Activated CD4-positive, alpha-beta T cell treated with anti-CD3 and anti-CD28 coated beads, Interleukin-2, amount 10 ng/mL, durations not matched to agents 24 days and 14 days (primary cell): ENCODE measurements at regions of chr12 and their contacts with region 1.

Region 1: DNA sequence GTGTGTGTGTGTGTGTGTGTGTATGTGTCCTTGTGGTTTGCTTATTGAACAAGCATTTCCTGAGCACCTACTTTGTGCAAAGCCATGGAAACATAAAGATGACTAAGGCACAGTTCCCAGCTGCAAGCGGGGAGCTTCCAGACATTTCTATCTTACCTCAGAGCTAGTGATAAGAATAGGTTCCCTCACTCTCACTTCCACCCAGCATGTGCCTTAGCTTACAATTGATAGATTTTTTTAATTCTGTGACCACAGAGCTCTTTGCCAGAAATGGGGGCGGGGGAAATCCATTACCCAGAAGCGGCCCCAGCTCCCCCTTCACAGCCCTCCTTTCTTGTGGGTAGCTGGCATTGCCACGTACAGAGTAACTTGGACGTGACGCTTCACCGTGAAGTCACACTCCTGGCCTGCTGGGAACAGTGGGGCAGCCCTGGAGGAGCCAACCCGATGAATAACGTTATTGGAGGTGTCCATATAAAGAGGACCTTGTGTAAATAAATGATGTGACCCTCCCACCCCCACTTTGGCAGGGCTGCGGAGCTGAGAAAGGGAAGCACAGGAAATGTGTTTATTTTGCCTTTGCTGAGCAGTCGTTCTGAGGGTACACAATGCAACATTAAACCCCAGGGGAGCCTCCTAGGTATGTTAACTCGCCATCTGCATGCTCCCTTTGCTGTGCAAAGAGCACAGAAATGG is 238.9 kb downstream of the CHST11 start:
- DNase-seq: peak; percentile 90
- H3K4me3 Mint-ChIP-seq: peak overlapping the region; percentile 68
- H3K27ac Mint-ChIP-seq: peak overlapping the region; percentile 96
- H3K4me1 Mint-ChIP-seq: peaks cover 66% of the 10 kb centered on the region
- H3K27me3 Mint-ChIP-seq: peaks cover 2% of the 10 kb centered on the region

Region 2: DNA sequence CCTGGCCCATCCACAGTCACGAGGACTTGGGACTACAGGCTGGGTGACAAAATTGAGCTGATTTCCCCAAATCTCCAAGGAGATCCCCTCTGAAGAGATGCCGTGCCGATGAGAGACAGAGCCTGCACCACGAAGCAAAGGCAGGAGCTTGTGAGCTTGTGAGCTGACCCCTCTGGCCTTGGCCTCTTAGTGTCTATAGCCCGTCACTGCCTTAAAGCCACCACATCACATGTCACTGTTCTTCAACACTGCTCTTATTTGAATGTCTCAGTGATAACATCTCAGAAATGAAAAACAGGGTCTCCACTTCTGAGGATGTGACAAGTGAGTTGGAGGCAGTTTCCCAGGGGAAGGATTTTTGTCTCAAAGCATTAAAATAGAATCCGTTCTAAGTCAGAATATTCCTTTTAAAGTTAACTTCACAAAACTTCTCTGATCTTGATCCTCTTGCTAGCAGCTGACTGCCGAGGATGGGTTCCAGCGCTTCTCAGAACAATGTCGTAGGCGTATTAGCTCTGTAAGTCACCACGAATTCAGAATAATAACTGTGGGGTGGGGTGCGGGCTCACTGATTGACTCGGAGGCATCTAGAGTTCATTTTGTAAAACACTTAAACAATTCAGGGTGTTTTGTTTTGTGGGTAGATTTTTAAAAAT is 201.3 kb before region 1 on chr12:
- intact Hi-C with region 1: loop called (anchors 2 kb)
- DNase-seq: peak; percentile 77
- H3K4me3 Mint-ChIP-seq: peak overlapping the region; percentile 81
- H3K27ac Mint-ChIP-seq: peak overlapping the region; percentile 81
- H3K4me1 Mint-ChIP-seq: peaks cover 74% of the 10 kb centered on the region
- H3K27me3 Mint-ChIP-seq: no peaks in the 10 kb centered on the region

Region 3: GRCh38 chr12:104671407-104672098 is 24.0 kb before region 1 on chr12:
- intact Hi-C with region 1: loop called (anchors 1 kb)
- DNase-seq: peak; percentile 92
- H3K4me3 Mint-ChIP-seq: peak overlapping the region; percentile 57
- H3K27ac Mint-ChIP-seq: peak overlapping the region; percentile 89
- H3K4me1 Mint-ChIP-seq: peaks cover 59% of the 10 kb centered on the region
- H3K27me3 Mint-ChIP-seq: no peaks in the 10 kb centered on the region

Region 4: DNA sequence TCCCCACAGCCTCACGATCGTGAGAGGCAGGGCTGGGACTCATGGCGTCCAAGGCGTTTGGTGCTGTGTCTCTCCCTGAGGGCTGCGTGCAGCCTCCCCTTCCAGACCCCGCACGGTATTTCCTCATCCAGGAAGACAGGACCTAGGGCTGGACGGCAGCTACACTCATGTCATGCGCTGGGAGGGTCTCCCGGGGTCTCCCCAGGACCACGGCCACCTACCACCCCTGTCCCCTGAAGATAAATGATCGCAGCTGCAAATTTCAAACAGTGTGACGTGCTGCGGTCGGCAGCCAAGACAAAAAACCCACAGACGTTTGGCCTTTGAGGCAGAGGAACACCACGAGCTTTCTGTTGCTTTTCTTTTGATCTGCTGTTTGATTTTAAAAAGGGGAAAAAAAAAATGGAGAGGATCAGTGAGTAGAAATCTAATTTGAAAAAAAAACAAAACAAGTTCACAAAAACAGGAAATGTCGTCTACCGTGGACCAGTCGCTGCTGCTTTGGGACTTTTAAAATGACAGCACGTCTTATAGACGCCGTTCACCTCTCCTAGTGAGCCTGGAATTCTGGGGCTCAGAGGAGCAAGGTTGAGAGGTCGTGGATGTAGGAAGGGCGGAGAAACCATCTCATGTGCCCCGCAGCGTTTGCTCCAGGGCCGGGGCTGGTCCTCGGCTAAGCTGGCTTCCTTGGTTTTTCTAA is 24.9 kb after region 1 on chr12:
- intact Hi-C with region 1: loop called (anchors 1 kb)
- DNase-seq: peak; percentile 93
- H3K4me3 Mint-ChIP-seq: peak overlapping the region; percentile 76
- H3K27ac Mint-ChIP-seq: peak overlapping the region; percentile 89
- H3K4me1 Mint-ChIP-seq: peaks cover 60% of the 10 kb centered on the region
- H3K27me3 Mint-ChIP-seq: no peaks in the 10 kb centered on the region

Region 5: GRCh38 chr12:104763168-104763805 is 67.7 kb after region 1 on chr12:
- intact Hi-C with region 1: loop called (anchors 1 kb)
- DNase-seq: peak; percentile 73
- H3K4me3 Mint-ChIP-seq: peak overlapping the region; percentile 66
- H3K27ac Mint-ChIP-seq: peak overlapping the region; percentile 77
- H3K4me1 Mint-ChIP-seq: peaks cover 43% of the 10 kb centered on the region
- H3K27me3 Mint-ChIP-seq: no peaks in the 10 kb centered on the region

Region 6: GRCh38 chr12:104827587-104827986 is 132.0 kb after region 1 on chr12:
- intact Hi-C with region 1: no loop called
- DNase-seq: no peak
- H3K4me3 Mint-ChIP-seq: no peak overlapping the region
- H3K27ac Mint-ChIP-seq: no peak overlapping the region
- H3K4me1 Mint-ChIP-seq: peaks cover 3% of the 10 kb centered on the region
- H3K27me3 Mint-ChIP-seq: no peaks in the 10 kb centered on the region

Region 7: DNA sequence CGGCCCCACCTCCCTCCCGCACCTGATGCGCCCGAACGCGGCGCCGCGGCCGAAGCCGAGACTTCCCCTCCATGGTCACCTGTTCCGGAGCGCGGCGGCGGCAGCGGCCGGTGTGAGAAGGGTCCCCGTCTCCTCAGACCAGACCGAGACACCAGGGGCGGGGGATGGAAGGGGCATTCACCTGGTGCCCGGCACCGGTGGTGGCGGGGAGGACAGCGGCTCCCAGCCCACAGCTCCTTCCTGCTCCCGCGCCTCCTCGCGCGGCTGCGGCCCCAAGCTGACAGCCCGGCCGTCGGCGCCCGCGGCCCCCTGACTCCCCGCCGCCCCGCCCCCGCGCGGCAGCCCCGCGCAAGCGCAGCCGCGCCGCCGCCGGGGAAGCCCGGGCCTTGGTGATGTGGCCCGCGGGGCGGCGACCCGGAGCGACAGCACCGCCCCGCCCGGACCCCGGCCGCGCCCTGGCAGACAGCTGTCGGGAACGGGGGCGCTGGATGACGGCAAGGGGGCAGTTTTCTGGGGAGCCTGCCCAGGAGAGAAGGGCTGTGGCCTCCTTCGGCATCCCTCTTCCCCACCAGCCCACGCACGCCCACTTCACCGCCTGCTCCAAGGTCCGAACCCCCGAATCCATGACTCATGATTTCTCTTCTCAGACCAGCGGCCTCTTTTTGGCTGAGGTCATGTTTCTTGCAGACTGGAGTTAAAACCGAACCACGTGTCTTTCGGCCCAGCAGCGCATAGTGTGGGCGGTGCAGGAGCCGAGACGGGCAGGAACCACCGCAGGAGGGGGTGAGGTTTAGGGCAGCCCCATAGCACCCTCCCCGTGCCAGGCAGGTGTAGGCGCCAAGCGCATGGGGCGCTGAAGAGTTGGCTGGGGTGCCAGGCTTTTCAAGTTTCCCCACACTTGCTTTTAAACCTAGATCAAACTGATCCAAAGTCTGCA is 262.7 kb after region 1 on chr12 and contains the start of gene SLC41A2:
- intact Hi-C with region 1: loop called (anchors 5 kb)
- DNase-seq: peak; percentile 95
- H3K4me3 Mint-ChIP-seq: peak within 1 kb of the TSS; percentile 85
- H3K27ac Mint-ChIP-seq: peak within 1 kb of the TSS; percentile 92
- H3K4me1 Mint-ChIP-seq: peaks cover 29% of the 10 kb centered on the region
- H3K27me3 Mint-ChIP-seq: peaks cover 39% of the 10 kb centered on the region
- total RNA-seq, gene SLC41A2: 11.5 and 12.3 TPM in 2 replicates